Sigmoid colon (tissue), 7 donors: ENCODE measurements at regions of chr22 and their contacts with region 1.

Region 1: DNA sequence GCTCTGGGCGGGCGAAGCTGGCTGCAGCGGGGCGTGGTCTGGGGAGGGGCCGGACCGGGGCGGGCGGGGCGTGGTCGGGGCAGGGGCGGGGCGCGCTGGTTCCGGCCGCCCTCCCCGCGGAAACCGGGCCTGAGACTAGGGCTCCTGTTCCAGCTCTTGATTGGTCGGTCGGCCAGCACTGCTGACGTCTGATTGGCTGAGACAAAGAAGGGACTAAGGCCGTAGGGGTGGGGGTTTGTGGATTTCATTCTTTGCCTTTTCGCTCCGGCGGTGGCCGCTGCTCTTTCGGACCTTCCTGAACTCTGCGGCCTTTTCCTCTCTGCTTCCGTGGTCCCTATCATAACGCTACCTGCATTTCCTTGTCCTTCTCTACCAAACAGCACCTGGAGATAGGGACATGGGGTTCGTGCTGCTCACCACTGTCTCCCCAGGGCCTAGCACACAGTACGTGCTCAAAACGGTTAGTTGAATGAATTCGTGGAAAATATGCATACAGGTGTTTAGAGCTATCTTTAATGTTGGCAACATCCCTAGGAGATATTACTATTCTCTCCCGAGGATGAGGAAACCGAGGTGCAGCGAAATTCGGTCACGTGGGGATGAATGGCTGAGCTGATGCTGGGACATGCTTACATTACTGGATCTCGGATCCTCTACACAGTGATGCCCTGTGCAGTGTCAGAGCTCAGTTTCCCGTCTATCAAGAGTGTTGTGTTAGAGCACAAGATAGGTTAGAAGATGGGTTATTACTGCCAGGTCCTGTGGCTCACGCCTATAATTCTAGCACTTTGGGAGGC is 62.8 kb downstream of the NFAM1 start:
- DNase-seq: peak; percentile 97
- H3K4me3 ChIP-seq: peak overlapping the region; percentile 46 to 69 (median 56)
- H3K27ac ChIP-seq: peak overlapping the region; percentile 69 to 82 (median 78)
- H3K4me1 ChIP-seq: peaks cover 0 to 54% (median 50%) of the 10 kb centered on the region in 4 donors
- H3K27me3 ChIP-seq: no peaks in the 10 kb centered on the region
- CTCF ChIP-seq: no peak
- EP300 ChIP-seq: no peak
- POLR2A ChIP-seq: no peak

Region 2: GRCh38 chr22:42079319-42080251 is 289.9 kb before region 1 on chr22 and contains the start of gene SMDT1:
- intact Hi-C with region 1: loop called (anchors 5 kb)
- DNase-seq: peak; percentile 100
- H3K4me3 ChIP-seq: peak within 1 kb of the TSS; percentile 61 to 68 (median 63)
- H3K27ac ChIP-seq: peak within 1 kb of the TSS; percentile 93 to 99 (median 98)
- H3K4me1 ChIP-seq: peaks cover 0 to 48% (median 39%) of the 10 kb centered on the region in 4 donors
- H3K27me3 ChIP-seq: no peaks in the 10 kb centered on the region
- CTCF ChIP-seq: no peak
- EP300 ChIP-seq: peak in 1 of 4 donors; percentile 44
- POLR2A ChIP-seq: peak; percentile 93 to 95
- total RNA-seq, gene SMDT1: 12.1 to 23.9 (median 21.9) TPM

Region 3: GRCh38 chr22:42270512-42271417 is 98.7 kb before region 1 on chr22 and contains the start of gene TCF20:
- intact Hi-C with region 1: loop called (anchors 2 kb)
- DNase-seq: peak; percentile 86
- H3K4me3 ChIP-seq: peak within 1 kb of the TSS; percentile 78 to 100 (median 96)
- H3K27ac ChIP-seq: peak within 1 kb of the TSS; percentile 84 to 88 (median 85)
- H3K4me1 ChIP-seq: peaks cover 0 to 23% (median 16%) of the 10 kb centered on the region in 4 donors
- H3K27me3 ChIP-seq: no peaks in the 10 kb centered on the region
- CTCF ChIP-seq: no peak
- EP300 ChIP-seq: no peak
- POLR2A ChIP-seq: no peak
- total RNA-seq, gene TCF20: 21.6 to 31.0 (median 25.1) TPM

Region 4: DNA sequence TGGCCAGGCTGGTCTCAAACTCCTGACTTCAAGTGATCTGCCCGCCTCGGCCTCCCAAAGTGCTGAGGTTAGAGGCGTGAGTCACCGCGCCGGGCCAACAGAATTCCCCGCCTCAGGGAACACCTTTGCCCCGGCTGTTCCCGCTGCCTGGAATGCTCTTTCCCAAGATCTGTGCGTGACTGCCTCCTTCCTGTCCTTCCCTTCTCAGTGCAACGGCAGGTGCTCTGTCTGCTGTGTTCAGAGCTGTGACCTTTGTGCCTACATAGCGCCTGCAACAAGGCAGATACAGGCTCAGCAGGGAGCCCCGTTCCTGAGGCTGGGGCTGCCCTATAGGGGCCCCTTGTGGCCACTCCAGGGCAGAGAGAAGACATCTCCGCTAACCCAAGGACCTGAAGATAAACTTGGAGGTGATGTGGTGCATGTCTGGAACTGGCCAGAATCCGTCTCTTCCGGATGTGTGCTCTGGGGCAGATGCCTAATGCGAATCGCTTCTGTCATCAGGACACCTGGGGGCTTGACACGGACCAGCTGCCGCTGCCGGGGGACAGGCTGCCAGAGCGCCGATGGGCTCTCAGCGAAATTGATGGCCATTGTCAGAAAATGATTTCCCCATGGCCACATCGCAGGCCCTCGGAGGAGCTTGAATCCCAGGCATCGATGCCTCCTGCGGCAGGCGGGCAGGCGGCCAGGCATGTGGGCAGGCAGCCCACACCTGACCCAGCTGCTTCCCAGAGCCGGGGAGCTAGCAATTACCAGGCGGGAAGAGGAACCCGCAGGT is 55.5 kb before region 1 on chr22:
- intact Hi-C with region 1: loop called (anchors 1 kb)
- DNase-seq: peak; percentile 75
- H3K4me3 ChIP-seq: no peak overlapping the region
- H3K27ac ChIP-seq: no peak overlapping the region
- H3K4me1 ChIP-seq: peaks cover 0 to 45% (median 35%) of the 10 kb centered on the region in 4 donors
- H3K27me3 ChIP-seq: no peaks in the 10 kb centered on the region
- CTCF ChIP-seq: peak in 3 of 4 experiments; percentile 15 to 28 (median 21)
- EP300 ChIP-seq: no peak
- POLR2A ChIP-seq: no peak

Region 5: DNA sequence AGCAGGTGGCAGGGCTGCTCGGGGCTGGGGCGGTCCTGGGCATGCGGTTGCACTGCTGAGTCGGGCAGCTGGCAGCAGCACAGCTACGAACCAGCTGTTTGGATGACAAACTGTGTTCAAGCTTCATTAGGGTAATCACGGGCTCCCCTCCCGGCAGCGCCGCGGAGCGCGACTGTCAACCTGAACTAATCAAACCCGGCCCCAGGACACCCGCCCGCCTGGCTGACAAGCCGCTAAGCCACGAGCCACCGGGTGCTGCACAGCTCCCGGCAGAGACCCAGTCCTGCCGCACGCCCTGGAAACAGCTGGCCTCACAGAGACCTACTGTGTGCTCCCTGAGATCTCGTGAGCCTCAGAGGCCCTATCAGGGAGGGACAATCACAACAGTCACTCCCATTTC is 38.4 kb before region 1 on chr22:
- intact Hi-C with region 1: no loop called
- DNase-seq: no peak
- H3K4me3 ChIP-seq: no peak overlapping the region
- H3K27ac ChIP-seq: no peak overlapping the region
- H3K4me1 ChIP-seq: peaks cover 0 to 14% (median 11%) of the 10 kb centered on the region in 4 donors
- H3K27me3 ChIP-seq: no peaks in the 10 kb centered on the region
- CTCF ChIP-seq: no peak
- EP300 ChIP-seq: no peak
- POLR2A ChIP-seq: no peak

Region 6: GRCh38 chr22:42343551-42344081 is 25.8 kb before region 1 on chr22:
- intact Hi-C with region 1: loop called (anchors 1 kb)
- DNase-seq: no peak
- H3K4me3 ChIP-seq: peak overlapping the region; percentile 25 to 55 (median 50)
- H3K27ac ChIP-seq: peak overlapping the region; percentile 83 to 93 (median 88)
- H3K4me1 ChIP-seq: peaks cover 0 to 40% (median 37%) of the 10 kb centered on the region in 4 donors
- H3K27me3 ChIP-seq: no peaks in the 10 kb centered on the region
- CTCF ChIP-seq: no peak
- EP300 ChIP-seq: no peak
- POLR2A ChIP-seq: no peak

Region 7: GRCh38 chr22:42425337-42425988 is 56.0 kb after region 1 on chr22:
- intact Hi-C with region 1: loop called (anchors 5 kb)
- DNase-seq: peak; percentile 87
- H3K4me3 ChIP-seq: no peak overlapping the region
- H3K27ac ChIP-seq: peak overlapping the region in 3 of 4 donors; percentile 52 to 68 (median 67)
- H3K4me1 ChIP-seq: peaks cover 0 to 15% (median 7%) of the 10 kb centered on the region in 4 donors
- H3K27me3 ChIP-seq: no peaks in the 10 kb centered on the region
- CTCF ChIP-seq: no peak
- EP300 ChIP-seq: peak in 2 of 4 donors; percentile 23 to 91
- POLR2A ChIP-seq: no peak